Ovary (tissue), 10 donors: ENCODE measurements at regions of chr3 and their contacts with region 1.

Region 1: GRCh38 chr3:154252759-154253638 is 71.3 kb downstream of the DHX36 start:
- DNase-seq: peak; percentile 83 to 95 (median 91)
- H3K4me3 ChIP-seq: no peak overlapping the region
- H3K27ac ChIP-seq: no peak overlapping the region
- H3K4me1 ChIP-seq: no peaks in the 10 kb centered on the region
- H3K27me3 ChIP-seq: no peaks in the 10 kb centered on the region
- CTCF ChIP-seq: peak; percentile 69 to 82 (median 80)
- EP300 ChIP-seq: no peak
- POLR2A ChIP-seq: no peak

Region 2: GRCh38 chr3:154095832-154096421 is 157.1 kb before region 1 on chr3:
- intact Hi-C with region 1: loop called in 3 of 4 experiments (anchors 10 kb)
- DNase-seq: no peak
- H3K4me3 ChIP-seq: no peak overlapping the region
- H3K27ac ChIP-seq: no peak overlapping the region
- H3K4me1 ChIP-seq: no peaks in the 10 kb centered on the region
- H3K27me3 ChIP-seq: no peaks in the 10 kb centered on the region
- CTCF ChIP-seq: no peak
- EP300 ChIP-seq: no peak
- POLR2A ChIP-seq: no peak

Region 3: GRCh38 chr3:155342344-155342743 is 1089.3 kb after region 1 on chr3:
- intact Hi-C with region 1: no loop called
- DNase-seq: no peak
- H3K4me3 ChIP-seq: no peak overlapping the region
- H3K27ac ChIP-seq: no peak overlapping the region
- H3K4me1 ChIP-seq: no peaks in the 10 kb centered on the region
- H3K27me3 ChIP-seq: no peaks in the 10 kb centered on the region
- CTCF ChIP-seq: no peak
- EP300 ChIP-seq: no peak
- POLR2A ChIP-seq: no peak